CD8-positive, alpha-beta memory T cell (primary cell): ENCODE measurements at regions of chr6 and their contacts with region 1.

Region 1: GRCh38 chr6:108541838-108542759 is 18.6 kb upstream of the FOXO3 start:
- DNase-seq: peak; percentile 54 to 80 (median 65)
- H3K4me3 ChIP-seq: no peak overlapping the region
- H3K4me3 Mint-ChIP-seq: peak overlapping the region in 3 of 7 donors; percentile 8 to 32 (median 28)
- H3K27ac ChIP-seq: no peak overlapping the region
- H3K27ac Mint-ChIP-seq: peak overlapping the region in 3 of 8 donors; percentile 24 to 84 (median 33)
- H3K4me1 ChIP-seq: peaks cover 19% of the 10 kb centered on the region
- H3K4me1 Mint-ChIP-seq: peaks cover 20 to 26% (median 22%) of the 10 kb centered on the region in 3 donors
- H3K27me3 ChIP-seq: no peaks in the 10 kb centered on the region
- H3K27me3 Mint-ChIP-seq: peaks cover 0 to 8% of the 10 kb centered on the region in 2 donors

Region 2: GRCh38 chr6:108592371-108593337 is 50.6 kb after region 1 on chr6:
- CTCF ChIA-PET with region 1: no interaction called
- POLR2A ChIA-PET with region 1: no interaction called
- DNase-seq: peak; percentile 43 to 81 (median 56)
- H3K4me3 ChIP-seq: no peak overlapping the region
- H3K4me3 Mint-ChIP-seq: peak overlapping the region in 6 of 7 donors; percentile 23 to 65 (median 48)
- H3K27ac ChIP-seq: no peak overlapping the region
- H3K27ac Mint-ChIP-seq: peak overlapping the region in 7 of 8 donors; percentile 20 to 93 (median 57)
- H3K4me1 ChIP-seq: peaks cover 27% of the 10 kb centered on the region
- H3K4me1 Mint-ChIP-seq: peaks cover 64 to 92% (median 91%) of the 10 kb centered on the region in 3 donors
- H3K27me3 ChIP-seq: no peaks in the 10 kb centered on the region
- H3K27me3 Mint-ChIP-seq: no peaks in the 10 kb centered on the region

Region 3: GRCh38 chr6:108782179-108783041 is 240.3 kb after region 1 on chr6:
- CTCF ChIA-PET with region 1: interaction called, 16 read pairs
- POLR2A ChIA-PET with region 1: no interaction called
- DNase-seq: peak; percentile 56 to 84 (median 62)
- H3K4me3 ChIP-seq: peak overlapping the region; percentile 27
- H3K4me3 Mint-ChIP-seq: peak overlapping the region; percentile 84 to 89 (median 85)
- H3K27ac ChIP-seq: no peak overlapping the region
- H3K27ac Mint-ChIP-seq: peak overlapping the region in 5 of 8 donors; percentile 8 to 77 (median 75)
- H3K4me1 ChIP-seq: no peaks in the 10 kb centered on the region
- H3K4me1 Mint-ChIP-seq: peaks cover 8 to 12% (median 9%) of the 10 kb centered on the region in 3 donors
- H3K27me3 ChIP-seq: no peaks in the 10 kb centered on the region
- H3K27me3 Mint-ChIP-seq: peaks cover 0 to 4% of the 10 kb centered on the region in 2 donors

Region 4: GRCh38 chr6:108835218-108835850 is 293.2 kb after region 1 on chr6:
- CTCF ChIA-PET with region 1: interaction called, 14 read pairs
- POLR2A ChIA-PET with region 1: no interaction called
- DNase-seq: peak; percentile 69 to 88 (median 74)
- H3K4me3 ChIP-seq: no peak overlapping the region
- H3K4me3 Mint-ChIP-seq: no peak overlapping the region
- H3K27ac ChIP-seq: no peak overlapping the region
- H3K27ac Mint-ChIP-seq: peak overlapping the region in 5 of 8 donors; percentile 2 to 89 (median 81)
- H3K4me1 ChIP-seq: peaks cover 12% of the 10 kb centered on the region
- H3K4me1 Mint-ChIP-seq: peaks cover 32 to 44% (median 34%) of the 10 kb centered on the region in 3 donors
- H3K27me3 ChIP-seq: no peaks in the 10 kb centered on the region
- H3K27me3 Mint-ChIP-seq: peaks cover 0 to 8% of the 10 kb centered on the region in 2 donors